Endothelial cell of umbilical vein (primary cell): ENCODE measurements at regions of chr11 and their contacts with region 1.

Region 1: GRCh38 chr11:73307323-73308002 is 613 bp upstream of the ARHGEF17 start:
- DNase-seq: peak; percentile 99
- H3K4me3 ChIP-seq: peak overlapping the region; percentile 66 to 77 (median 72)
- H3K27ac ChIP-seq: peak overlapping the region; percentile 57
- H3K4me1 ChIP-seq: peaks cover 23% of the 10 kb centered on the region
- H3K27me3 ChIP-seq: no peaks in the 10 kb centered on the region
- CTCF ChIP-seq: peak; percentile 85 to 87
- POLR2A ChIP-seq: peak; percentile 54

Region 2: DNA sequence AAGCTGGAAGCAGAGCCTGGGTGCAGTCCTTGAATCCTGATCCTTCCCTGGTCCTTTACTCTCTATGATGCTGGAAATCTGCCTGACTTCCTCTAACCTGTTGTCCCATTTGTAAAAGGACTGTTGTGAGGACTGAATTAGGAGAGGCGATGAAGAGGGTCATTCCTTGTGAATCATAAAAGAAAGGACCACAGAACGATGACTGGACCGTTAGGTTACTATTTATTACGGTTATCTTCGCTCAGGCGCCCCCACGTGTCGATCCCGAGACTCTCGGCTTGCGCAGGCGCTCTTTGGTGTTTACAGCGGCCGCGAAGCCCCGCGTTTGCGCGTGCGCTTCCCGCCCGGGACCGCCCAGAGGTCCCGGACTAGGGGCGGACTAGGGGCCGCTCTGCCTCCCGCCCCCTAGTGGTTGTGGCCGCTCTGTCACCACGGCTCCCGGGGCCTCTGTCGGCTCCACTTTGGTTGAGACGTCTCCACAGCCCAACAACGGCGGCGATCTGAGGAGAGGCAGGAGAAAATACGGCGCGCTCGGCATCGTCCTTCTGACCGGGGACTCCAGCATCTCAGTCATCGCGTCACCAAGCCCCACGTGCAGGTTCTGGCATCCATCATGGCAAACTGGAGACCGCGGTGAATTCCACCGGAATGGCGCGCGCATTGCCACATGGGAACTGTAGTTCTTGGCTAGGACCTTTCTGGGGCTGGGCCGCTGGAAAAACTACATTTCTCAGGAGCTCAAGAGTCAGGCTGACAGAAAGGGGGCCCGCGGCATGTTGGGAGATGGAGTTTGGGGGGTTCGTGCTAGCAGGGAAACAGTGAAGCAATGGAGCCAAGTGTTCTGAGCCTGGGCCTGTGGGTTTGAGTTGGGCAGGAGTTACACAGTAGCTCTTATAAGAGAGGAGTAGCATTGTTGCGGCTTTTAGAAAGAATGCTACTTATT is 513.8 kb before region 1 on chr11 and contains the start of gene STARD10:
- CTCF ChIA-PET with region 1: no interaction called
- POLR2A ChIA-PET with region 1: no interaction called
- dilution Hi-C with region 1: no loop called
- intact Hi-C with region 1: no loop called
- DNase-seq: peak; percentile 96
- H3K4me3 ChIP-seq: peak within 1 kb of the TSS; percentile 66 to 85 (median 71)
- H3K27ac ChIP-seq: peak within 1 kb of the TSS; percentile 84
- H3K4me1 ChIP-seq: peaks cover 3% of the 10 kb centered on the region
- H3K27me3 ChIP-seq: no peaks in the 10 kb centered on the region
- CTCF ChIP-seq: peak; percentile 99
- POLR2A ChIP-seq: peak; percentile 75
- total RNA-seq, gene STARD10: 14.4 and 16.1 TPM in 2 replicates

Region 3: DNA sequence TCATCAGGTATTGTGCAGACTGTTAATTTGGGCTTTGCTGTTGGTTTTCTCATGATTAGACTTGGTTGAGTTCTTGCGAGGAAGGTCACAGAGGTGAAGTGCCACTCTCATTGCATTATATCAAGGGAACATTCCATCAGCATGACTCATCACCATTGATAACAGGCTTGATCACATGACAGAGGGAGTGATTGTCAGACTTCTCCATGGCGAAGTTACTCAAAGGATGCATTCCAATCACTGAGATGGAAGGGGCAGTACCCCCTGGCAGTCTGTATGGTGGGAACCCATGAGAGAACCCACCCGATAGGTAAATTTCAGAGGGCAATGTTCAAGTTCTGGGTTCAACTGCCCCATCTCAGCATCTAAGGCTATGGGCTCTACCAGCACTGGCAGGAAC is 108.8 kb before region 1 on chr11:
- CTCF ChIA-PET with region 1: no interaction called
- POLR2A ChIA-PET with region 1: no interaction called
- dilution Hi-C with region 1: no loop called
- intact Hi-C with region 1: no loop called
- DNase-seq: peak; percentile 81
- H3K4me3 ChIP-seq: no peak overlapping the region
- H3K27ac ChIP-seq: peak overlapping the region; percentile 52
- H3K4me1 ChIP-seq: peaks cover 13% of the 10 kb centered on the region
- H3K27me3 ChIP-seq: no peaks in the 10 kb centered on the region
- CTCF ChIP-seq: no peak
- POLR2A ChIP-seq: no peak

Region 4: DNA sequence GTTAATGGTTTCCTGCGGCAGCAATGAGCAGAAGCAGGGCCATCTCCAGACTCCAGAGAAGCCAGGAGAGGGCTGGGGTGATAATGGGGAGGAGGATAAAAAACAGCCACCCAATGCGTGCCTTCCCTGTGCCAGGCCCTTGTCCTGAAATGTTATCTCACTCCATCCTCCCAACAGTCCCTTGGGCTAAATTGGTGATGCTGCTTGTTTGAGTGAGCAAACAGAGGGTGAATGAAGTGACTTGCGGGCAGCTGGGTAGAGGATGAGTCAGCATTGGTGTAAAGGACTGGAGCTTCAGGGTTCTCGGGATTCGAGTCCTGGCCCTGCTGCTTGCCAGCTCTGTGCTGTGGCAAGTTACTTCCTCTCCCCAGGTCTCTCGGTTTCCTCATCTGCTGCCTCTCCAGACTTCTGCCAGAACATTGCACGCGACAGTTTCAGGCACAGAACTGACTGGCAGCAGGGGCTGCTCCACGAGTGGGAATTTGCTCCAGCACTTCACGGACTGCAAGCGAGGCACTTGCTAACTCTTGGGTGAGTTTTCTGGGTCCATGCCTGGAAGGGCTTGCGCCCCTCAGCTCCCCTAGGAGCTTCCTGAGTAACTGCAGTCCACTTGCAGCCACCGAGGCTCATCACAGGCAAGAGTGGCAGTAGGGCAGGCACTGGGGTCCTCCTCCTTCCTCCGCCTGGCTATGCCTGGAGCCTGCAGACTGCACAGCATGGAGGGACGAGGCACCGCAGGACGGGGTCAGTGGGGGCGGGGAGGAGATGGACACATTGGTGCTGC is 35.3 kb before region 1 on chr11 and contains the start of gene P2RY6:
- CTCF ChIA-PET with region 1: no interaction called
- POLR2A ChIA-PET with region 1: no interaction called
- dilution Hi-C with region 1: no loop called
- intact Hi-C with region 1: no loop called
- DNase-seq: no peak
- H3K4me3 ChIP-seq: no peak within 1 kb of the TSS
- H3K27ac ChIP-seq: no peak within 1 kb of the TSS
- H3K4me1 ChIP-seq: no peaks in the 10 kb centered on the region
- H3K27me3 ChIP-seq: peaks cover 0 to 3% of the 10 kb centered on the region in 2 experiments
- CTCF ChIP-seq: no peak
- POLR2A ChIP-seq: no peak
- total RNA-seq, gene P2RY6: 0.30 TPM in 1 of 2 replicates, not detected in the other

Region 5: GRCh38 chr11:73295231-73295995 is 12.1 kb before region 1 on chr11:
- CTCF ChIA-PET with region 1: interaction called, 26 read pairs
- POLR2A ChIA-PET with region 1: no interaction called
- dilution Hi-C with region 1: no loop called
- intact Hi-C with region 1: no loop called
- DNase-seq: peak; percentile 77
- H3K4me3 ChIP-seq: no peak overlapping the region
- H3K27ac ChIP-seq: no peak overlapping the region
- H3K4me1 ChIP-seq: peaks cover 2% of the 10 kb centered on the region
- H3K27me3 ChIP-seq: no peaks in the 10 kb centered on the region
- CTCF ChIP-seq: peak; percentile 95 to 96
- POLR2A ChIP-seq: no peak

Region 6: DNA sequence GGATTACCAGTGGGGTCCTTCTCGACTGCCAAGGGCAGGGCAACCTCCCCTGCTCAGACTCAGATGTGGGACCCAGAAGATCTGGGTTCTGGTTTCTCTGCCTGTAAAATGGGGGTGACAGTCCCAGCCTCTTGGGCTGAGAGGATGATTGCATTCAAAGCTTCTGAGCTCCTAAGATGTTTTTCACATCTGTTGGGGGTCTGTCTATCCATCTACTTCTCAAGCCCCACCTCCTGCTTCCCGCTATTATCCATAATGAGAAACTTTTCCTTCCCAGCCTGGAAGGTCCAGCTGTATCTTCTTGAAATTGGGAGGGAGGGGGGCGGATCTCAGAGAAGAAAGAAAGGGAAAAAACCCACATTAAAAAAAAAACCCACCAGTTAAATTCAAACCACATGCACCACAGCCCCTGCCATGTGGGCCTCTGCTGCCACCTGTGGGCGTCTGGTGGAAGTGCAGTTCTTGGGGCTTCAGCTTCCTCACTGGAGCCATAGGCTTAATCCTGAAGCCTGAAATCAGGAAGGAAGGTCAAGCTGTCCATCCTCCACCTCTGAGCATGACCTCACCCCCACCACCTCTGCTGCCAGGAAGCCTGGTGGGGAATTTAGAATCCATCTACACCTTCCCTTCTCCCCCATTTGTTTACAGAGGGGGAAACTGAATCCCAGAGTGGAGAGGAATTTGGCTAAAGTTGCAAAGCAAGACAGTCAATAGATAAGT is 27.9 kb after region 1 on chr11:
- CTCF ChIA-PET with region 1: interaction called, 455 read pairs
- POLR2A ChIA-PET with region 1: interaction called, 27 read pairs
- dilution Hi-C with region 1: no loop called
- intact Hi-C with region 1: loop called (anchors 1 kb)
- DNase-seq: peak; percentile 88
- H3K4me3 ChIP-seq: no peak overlapping the region
- H3K27ac ChIP-seq: peak overlapping the region; percentile 70
- H3K4me1 ChIP-seq: peaks cover 33% of the 10 kb centered on the region
- H3K27me3 ChIP-seq: no peaks in the 10 kb centered on the region
- CTCF ChIP-seq: peak; percentile 95 to 96
- POLR2A ChIP-seq: no peak

Region 7: GRCh38 chr11:73350908-73351636 is 43.6 kb after region 1 on chr11:
- CTCF ChIA-PET with region 1: interaction called, 37 read pairs
- POLR2A ChIA-PET with region 1: interaction called, 8 read pairs
- dilution Hi-C with region 1: no loop called
- intact Hi-C with region 1: no loop called
- DNase-seq: peak; percentile 73
- H3K4me3 ChIP-seq: no peak overlapping the region
- H3K27ac ChIP-seq: no peak overlapping the region
- H3K4me1 ChIP-seq: no peaks in the 10 kb centered on the region
- H3K27me3 ChIP-seq: no peaks in the 10 kb centered on the region
- CTCF ChIP-seq: peak; percentile 91 to 97
- POLR2A ChIP-seq: no peak

Region 8: GRCh38 chr11:73393479-73394380 is 86.3 kb after region 1 on chr11:
- CTCF ChIA-PET with region 1: interaction called, 55 read pairs
- POLR2A ChIA-PET with region 1: no interaction called
- dilution Hi-C with region 1: no loop called
- intact Hi-C with region 1: loop called (anchors 1 kb)
- DNase-seq: peak; percentile 73
- H3K4me3 ChIP-seq: no peak overlapping the region
- H3K27ac ChIP-seq: peak overlapping the region; percentile 46
- H3K4me1 ChIP-seq: peaks cover 12% of the 10 kb centered on the region
- H3K27me3 ChIP-seq: no peaks in the 10 kb centered on the region
- CTCF ChIP-seq: peak; percentile 78 to 89
- POLR2A ChIP-seq: no peak